GM10248 (cell line): ENCODE measurements at regions of chr12 and their contacts with region 1.

Region 1: DNA sequence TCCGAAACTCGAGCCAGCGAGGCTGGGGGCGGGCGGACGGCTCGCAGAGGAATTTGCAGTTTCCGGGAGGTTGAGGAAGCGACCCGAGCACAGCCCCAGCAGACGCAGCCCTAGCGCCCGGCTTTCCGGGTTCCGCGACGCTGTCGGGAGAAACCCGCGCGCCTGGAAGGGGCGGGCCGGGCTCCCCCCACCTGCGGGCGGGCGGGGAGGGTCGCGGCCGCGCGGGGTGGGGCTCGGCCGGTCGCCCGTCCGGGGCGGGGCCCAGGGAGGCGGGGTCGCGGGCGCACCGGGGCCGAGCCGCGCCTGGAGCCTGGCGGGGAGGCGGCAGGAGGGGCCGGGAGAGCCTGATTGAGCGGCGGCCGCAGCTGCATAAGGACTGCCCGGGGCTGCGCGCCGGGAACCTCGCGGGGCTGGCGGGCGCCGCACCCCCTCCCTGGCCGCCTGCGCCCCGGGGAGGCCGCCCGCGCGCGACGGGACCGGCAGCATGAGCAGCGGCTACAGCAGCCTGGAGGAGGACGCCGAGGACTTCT is at the start of gene RASSF3:
- DNase-seq: peak; percentile 89
- CTCF ChIP-seq: no peak

Region 2: GRCh38 chr12:64679487-64679983 is 69.3 kb after region 1 on chr12:
- CTCF ChIA-PET with region 1: interaction called, 6 read pairs
- POLR2A ChIA-PET with region 1: interaction called, 10 read pairs
- DNase-seq: no peak
- CTCF ChIP-seq: no peak